ENCODE measurements at regions of chr13 and their contacts with region 1.

Region 1: GRCh38 chr13:40190641-40191100 is 475.8 kb downstream of the FOXO1 start:
- DNase-seq: peak in 8 of 9 donors; percentile 36 to 87 (median 80)
- ATAC-seq: peak; percentile 49
- H3K4me3 ChIP-seq: peak overlapping the region; percentile 24
- H3K4me3 Mint-ChIP-seq: peak overlapping the region; percentile 74 to 89 (median 81)
- H3K27ac ChIP-seq: peak overlapping the region; percentile 63
- H3K27ac Mint-ChIP-seq: peak overlapping the region; percentile 96 to 100 (median 97)
- H3K4me1 ChIP-seq: peaks cover 55 to 69% of the 10 kb centered on the region in 2 donors
- H3K4me1 Mint-ChIP-seq: peaks cover 47 to 97% (median 87%) of the 10 kb centered on the region in 7 donors
- H3K27me3 ChIP-seq: no peaks in the 10 kb centered on the region
- H3K27me3 Mint-ChIP-seq: no peaks in the 10 kb centered on the region

Region 2: GRCh38 chr13:38735721-38736440 is 1454.8 kb before region 1 on chr13:
- CTCF ChIA-PET with region 1: no interaction called
- POLR2A ChIA-PET with region 1: no interaction called
- intact Hi-C with region 1: no loop called
- DNase-seq: no peak
- ATAC-seq: no peak
- H3K4me3 ChIP-seq: no peak overlapping the region
- H3K4me3 Mint-ChIP-seq: no peak overlapping the region
- H3K27ac ChIP-seq: no peak overlapping the region
- H3K27ac Mint-ChIP-seq: no peak overlapping the region
- H3K4me1 ChIP-seq: no peaks in the 10 kb centered on the region
- H3K4me1 Mint-ChIP-seq: no peaks in the 10 kb centered on the region
- H3K27me3 ChIP-seq: no peaks in the 10 kb centered on the region
- H3K27me3 Mint-ChIP-seq: peaks cover 1 to 12% (median 8%) of the 10 kb centered on the region in 5 donors

Region 3: GRCh38 chr13:38804536-38804935 is 1386.1 kb before region 1 on chr13:
- CTCF ChIA-PET with region 1: no interaction called
- POLR2A ChIA-PET with region 1: no interaction called
- intact Hi-C with region 1: no loop called
- DNase-seq: no peak
- ATAC-seq: no peak
- H3K4me3 ChIP-seq: no peak overlapping the region
- H3K4me3 Mint-ChIP-seq: no peak overlapping the region
- H3K27ac ChIP-seq: no peak overlapping the region
- H3K27ac Mint-ChIP-seq: no peak overlapping the region
- H3K4me1 ChIP-seq: no peaks in the 10 kb centered on the region
- H3K4me1 Mint-ChIP-seq: no peaks in the 10 kb centered on the region
- H3K27me3 ChIP-seq: no peaks in the 10 kb centered on the region
- H3K27me3 Mint-ChIP-seq: no peaks in the 10 kb centered on the region

Region 4: DNA sequence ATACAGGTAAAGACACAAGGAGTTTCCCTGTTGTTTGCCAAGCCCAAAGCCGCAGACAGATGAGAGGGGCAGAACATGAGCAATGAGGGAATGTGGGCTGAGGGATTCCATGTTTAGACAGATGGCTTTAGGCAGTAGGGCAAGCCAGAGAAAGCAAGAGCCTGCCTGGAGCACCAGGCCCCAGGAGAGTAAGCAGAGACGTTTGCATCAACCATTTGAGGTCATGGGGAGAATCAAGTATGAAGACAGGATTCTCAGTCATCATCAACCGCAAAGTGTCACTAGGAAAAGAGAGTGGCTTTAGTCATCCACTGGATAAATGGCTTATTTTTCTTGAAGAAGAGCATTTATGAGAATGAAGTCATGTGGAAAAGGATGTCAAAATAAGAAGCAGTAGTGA is 350.5 kb before region 1 on chr13:
- CTCF ChIA-PET with region 1: no interaction called
- POLR2A ChIA-PET with region 1: no interaction called
- intact Hi-C with region 1: no loop called
- DNase-seq: no peak
- ATAC-seq: no peak
- H3K4me3 ChIP-seq: no peak overlapping the region
- H3K4me3 Mint-ChIP-seq: no peak overlapping the region
- H3K27ac ChIP-seq: no peak overlapping the region
- H3K27ac Mint-ChIP-seq: no peak overlapping the region
- H3K4me1 ChIP-seq: no peaks in the 10 kb centered on the region
- H3K4me1 Mint-ChIP-seq: peaks cover 0 to 3% (median 0%) of the 10 kb centered on the region in 7 donors
- H3K27me3 ChIP-seq: no peaks in the 10 kb centered on the region
- H3K27me3 Mint-ChIP-seq: peaks cover 0 to 6% (median 0%) of the 10 kb centered on the region in 5 donors

Region 5: DNA sequence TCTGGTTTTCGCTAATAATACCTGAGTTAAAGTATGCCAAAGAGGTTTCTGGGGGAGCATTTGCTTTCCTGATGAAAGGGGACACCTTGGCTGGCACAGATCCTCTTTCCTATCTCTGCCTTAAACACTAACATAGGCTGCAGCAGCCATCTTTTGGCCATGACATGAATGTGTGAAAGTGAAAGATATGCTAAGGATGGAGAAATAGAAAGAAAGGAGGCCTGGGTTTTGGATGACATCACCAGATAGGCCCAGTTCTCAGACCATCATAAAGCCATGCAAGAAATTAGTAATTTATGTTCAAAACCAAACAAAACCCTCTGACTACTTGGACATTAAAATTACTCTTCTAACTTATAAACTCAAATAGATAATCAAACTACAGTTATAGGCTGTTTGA is 255.5 kb before region 1 on chr13:
- CTCF ChIA-PET with region 1: no interaction called
- POLR2A ChIA-PET with region 1: no interaction called
- intact Hi-C with region 1: no loop called
- DNase-seq: no peak
- ATAC-seq: no peak
- H3K4me3 ChIP-seq: no peak overlapping the region
- H3K4me3 Mint-ChIP-seq: no peak overlapping the region
- H3K27ac ChIP-seq: no peak overlapping the region
- H3K27ac Mint-ChIP-seq: no peak overlapping the region
- H3K4me1 ChIP-seq: peaks cover 0 to 10% of the 10 kb centered on the region in 2 donors
- H3K4me1 Mint-ChIP-seq: peaks cover 2 to 27% (median 20%) of the 10 kb centered on the region in 7 donors
- H3K27me3 ChIP-seq: no peaks in the 10 kb centered on the region
- H3K27me3 Mint-ChIP-seq: no peaks in the 10 kb centered on the region

Region 6: GRCh38 chr13:40069173-40070044 is 121.3 kb before region 1 on chr13:
- CTCF ChIA-PET with region 1: interaction called, 16 read pairs
- POLR2A ChIA-PET with region 1: interaction called, 11 read pairs
- intact Hi-C with region 1: loop called (anchors 1 kb)
- DNase-seq: peak; percentile 46 to 76 (median 64)
- ATAC-seq: peak; percentile 96
- H3K4me3 ChIP-seq: no peak overlapping the region
- H3K4me3 Mint-ChIP-seq: peak overlapping the region; percentile 34 to 86 (median 68)
- H3K27ac ChIP-seq: no peak overlapping the region
- H3K27ac Mint-ChIP-seq: peak overlapping the region; percentile 22 to 88 (median 64)
- H3K4me1 ChIP-seq: peaks cover 0 to 22% of the 10 kb centered on the region in 2 donors
- H3K4me1 Mint-ChIP-seq: peaks cover 6 to 44% (median 29%) of the 10 kb centered on the region in 7 donors
- H3K27me3 ChIP-seq: no peaks in the 10 kb centered on the region
- H3K27me3 Mint-ChIP-seq: no peaks in the 10 kb centered on the region

Region 7: DNA sequence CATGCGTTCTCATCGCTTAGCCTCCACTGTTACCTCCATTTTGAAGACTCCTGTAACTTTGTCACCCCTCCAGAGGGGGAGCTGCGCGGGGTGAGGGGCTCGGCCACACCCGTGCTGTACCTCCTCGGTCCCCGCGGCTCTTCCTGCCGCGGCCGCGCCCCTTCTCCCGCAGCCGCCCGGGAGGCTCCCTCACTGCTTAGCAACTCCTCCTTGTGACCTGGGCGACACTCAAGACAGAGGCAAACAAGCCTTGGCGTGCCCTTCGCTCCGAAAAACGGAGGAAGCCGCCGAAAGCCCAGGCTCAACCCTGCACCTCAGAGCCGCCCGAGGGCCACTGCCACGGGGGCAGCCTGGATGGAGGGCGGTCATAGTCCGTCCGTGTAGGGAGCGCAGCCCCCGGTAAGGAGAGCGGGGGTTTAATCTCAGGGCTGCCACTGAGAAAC is 18.5 kb before region 1 on chr13:
- CTCF ChIA-PET with region 1: interaction called, 4 read pairs
- POLR2A ChIA-PET with region 1: interaction called, 24 read pairs
- intact Hi-C with region 1: no loop called
- DNase-seq: no peak
- ATAC-seq: peak; percentile 24
- H3K4me3 ChIP-seq: no peak overlapping the region
- H3K4me3 Mint-ChIP-seq: peak overlapping the region in 5 of 10 donors; percentile 18 to 57 (median 38)
- H3K27ac ChIP-seq: no peak overlapping the region
- H3K27ac Mint-ChIP-seq: peak overlapping the region in 1 of 9 donors; percentile 47
- H3K4me1 ChIP-seq: no peaks in the 10 kb centered on the region
- H3K4me1 Mint-ChIP-seq: peaks cover 13 to 62% (median 43%) of the 10 kb centered on the region in 7 donors
- H3K27me3 ChIP-seq: no peaks in the 10 kb centered on the region
- H3K27me3 Mint-ChIP-seq: peaks cover 0 to 4% (median 0%) of the 10 kb centered on the region in 5 donors

Region 8: DNA sequence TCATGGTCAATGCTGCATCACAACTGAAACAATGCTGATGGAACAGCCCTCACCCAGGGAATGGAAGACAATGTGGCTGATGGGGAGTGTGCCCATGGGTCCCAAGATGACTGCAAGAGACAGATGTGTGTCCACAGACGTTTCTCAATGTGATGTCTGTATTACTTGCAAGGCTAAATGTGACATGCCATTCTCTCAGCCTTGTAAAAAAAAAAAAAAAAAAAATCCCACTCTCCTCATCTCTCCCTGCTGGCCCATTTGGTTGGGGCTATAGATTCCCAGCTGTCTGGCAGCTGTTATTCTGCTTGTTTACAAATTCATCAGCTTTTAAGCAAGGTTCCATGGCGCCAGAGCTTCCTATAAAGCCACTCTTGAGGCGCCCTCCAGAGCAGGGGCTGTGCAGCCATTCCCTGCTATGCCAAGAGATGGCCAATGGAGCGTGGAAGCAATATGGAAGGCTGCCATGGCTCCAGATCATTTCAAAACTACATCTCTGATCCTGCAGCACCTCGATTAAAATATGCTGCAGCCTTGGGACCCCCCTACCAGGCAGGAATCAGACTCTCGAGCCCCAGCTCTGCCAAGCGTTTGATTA is 181.0 kb after region 1 on chr13:
- CTCF ChIA-PET with region 1: no interaction called
- POLR2A ChIA-PET with region 1: interaction called, 3 read pairs
- intact Hi-C with region 1: loop called in 1 of 2 experiments (anchors 5 kb)
- DNase-seq: no peak
- ATAC-seq: no peak
- H3K4me3 ChIP-seq: no peak overlapping the region
- H3K4me3 Mint-ChIP-seq: peak overlapping the region in 7 of 10 donors; percentile 34 to 63 (median 54)
- H3K27ac ChIP-seq: no peak overlapping the region
- H3K27ac Mint-ChIP-seq: peak overlapping the region in 5 of 9 donors; percentile 21 to 84 (median 30)
- H3K4me1 ChIP-seq: peaks cover 8 to 27% of the 10 kb centered on the region in 2 donors
- H3K4me1 Mint-ChIP-seq: peaks cover 23 to 56% (median 48%) of the 10 kb centered on the region in 7 donors
- H3K27me3 ChIP-seq: no peaks in the 10 kb centered on the region
- H3K27me3 Mint-ChIP-seq: no peaks in the 10 kb centered on the region

Region 9: DNA sequence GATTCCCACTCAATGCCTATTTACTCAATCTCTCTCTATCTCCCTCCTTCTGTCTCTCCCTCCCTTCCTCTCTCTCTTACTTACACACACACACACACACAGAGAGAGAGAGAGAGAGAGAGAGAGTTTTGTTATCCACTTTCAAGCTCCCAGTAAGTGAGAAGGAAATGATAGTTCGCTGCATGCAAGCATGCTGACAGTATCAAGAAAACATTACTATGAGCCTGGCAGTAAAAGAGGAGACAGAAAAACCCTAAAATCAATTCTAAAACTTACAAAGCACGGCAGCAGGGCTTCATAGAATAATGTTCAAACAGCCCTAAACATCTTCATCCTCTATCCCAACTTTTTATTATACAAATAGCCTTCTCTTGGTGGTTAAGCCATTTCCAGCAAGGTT is 303.8 kb after region 1 on chr13:
- CTCF ChIA-PET with region 1: no interaction called
- POLR2A ChIA-PET with region 1: interaction called, 15 read pairs
- intact Hi-C with region 1: loop called (anchors 1 to 2 kb)
- DNase-seq: peak in 7 of 9 donors; percentile 18 to 64 (median 59)
- ATAC-seq: peak; percentile 66
- H3K4me3 ChIP-seq: peak overlapping the region; percentile 49
- H3K4me3 Mint-ChIP-seq: peak overlapping the region; percentile 76 to 97 (median 85)
- H3K27ac ChIP-seq: peak overlapping the region; percentile 70
- H3K27ac Mint-ChIP-seq: peak overlapping the region; percentile 88 to 98 (median 96)
- H3K4me1 ChIP-seq: peaks cover 38 to 66% of the 10 kb centered on the region in 2 donors
- H3K4me1 Mint-ChIP-seq: peaks cover 54 to 92% (median 85%) of the 10 kb centered on the region in 7 donors
- H3K27me3 ChIP-seq: no peaks in the 10 kb centered on the region
- H3K27me3 Mint-ChIP-seq: no peaks in the 10 kb centered on the region

Region 10: DNA sequence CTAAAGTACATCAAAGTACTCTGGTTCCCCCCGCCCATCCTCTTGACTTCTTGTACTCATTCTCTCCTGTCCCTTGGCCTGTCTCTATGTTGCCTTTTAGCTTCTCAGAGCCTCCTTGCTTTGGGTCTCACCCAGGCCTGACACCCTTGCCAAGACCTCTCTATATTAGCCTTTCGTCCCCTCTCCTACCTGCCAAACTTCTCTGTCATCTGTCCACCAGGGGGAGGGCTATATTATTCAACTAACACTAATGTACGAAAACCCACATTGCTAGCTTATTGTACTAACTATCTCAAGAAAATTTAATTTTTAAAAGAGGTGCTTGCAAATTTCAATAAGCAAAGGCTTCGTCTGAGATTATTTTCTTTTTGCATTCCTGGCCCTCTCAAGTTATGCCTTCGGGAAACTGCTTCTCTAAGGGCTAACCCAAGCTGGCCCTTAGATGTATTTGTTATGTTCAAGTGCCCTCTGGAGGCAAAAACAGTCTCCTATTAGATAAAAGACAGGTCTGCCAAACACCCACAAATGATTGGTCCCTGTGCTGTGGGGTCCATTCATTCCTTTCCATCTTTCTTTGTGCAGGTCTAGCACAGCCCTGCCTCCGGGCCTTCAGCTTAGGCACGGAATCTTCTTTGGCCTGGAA is 586.6 kb after region 1 on chr13:
- CTCF ChIA-PET with region 1: no interaction called
- POLR2A ChIA-PET with region 1: no interaction called
- intact Hi-C with region 1: loop called (anchors 5 kb)
- DNase-seq: peak in 2 of 9 donors; percentile 15 to 44
- ATAC-seq: peak; percentile 78
- H3K4me3 ChIP-seq: peak overlapping the region; percentile 37
- H3K4me3 Mint-ChIP-seq: peak overlapping the region; percentile 68 to 92 (median 82)
- H3K27ac ChIP-seq: peak overlapping the region; percentile 61
- H3K27ac Mint-ChIP-seq: peak overlapping the region; percentile 94 to 99 (median 97)
- H3K4me1 ChIP-seq: peaks cover 21 to 24% of the 10 kb centered on the region in 2 donors
- H3K4me1 Mint-ChIP-seq: peaks cover 19 to 36% (median 32%) of the 10 kb centered on the region in 7 donors
- H3K27me3 ChIP-seq: no peaks in the 10 kb centered on the region
- H3K27me3 Mint-ChIP-seq: no peaks in the 10 kb centered on the region